Mucosa of descending colon (tissue), 3 donors: ENCODE measurements at regions of chr17 and their contacts with region 1.

Region 1: DNA sequence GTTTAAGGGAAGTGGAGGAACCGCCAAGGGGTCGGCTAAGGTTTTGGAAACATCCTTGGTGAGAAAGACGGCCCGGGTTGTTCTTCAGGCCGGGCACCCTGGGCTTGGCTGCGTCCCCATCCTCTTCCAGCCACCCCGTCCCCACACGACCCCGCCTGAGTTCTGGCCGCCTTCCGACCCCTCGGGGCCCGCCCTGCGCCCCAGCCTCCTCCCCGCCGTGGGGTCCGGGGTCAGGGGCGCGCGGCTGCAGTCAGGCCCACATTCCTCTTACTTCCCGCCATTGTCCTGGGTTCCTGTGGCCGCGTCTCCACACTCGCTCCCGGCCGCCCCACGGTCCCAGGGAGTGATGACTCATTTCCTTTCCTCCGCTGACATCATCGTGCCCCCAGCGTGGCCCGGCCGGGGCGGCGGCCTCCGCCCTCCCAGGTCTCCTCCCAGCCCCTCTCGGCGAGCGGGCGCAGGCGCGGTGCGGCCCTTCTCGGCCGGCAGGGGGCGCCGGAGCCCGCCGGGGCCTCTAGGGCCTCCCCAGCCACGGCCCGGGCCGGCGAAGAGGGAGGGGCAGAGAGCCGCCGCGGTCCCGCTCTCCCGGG is 59.6 kb downstream of the WSB1 start:
- DNase-seq: peak; percentile 86 to 94 (median 94)
- ATAC-seq: peak; percentile 96
- H3K4me3 ChIP-seq: peak overlapping the region; percentile 20
- H3K4me1 ChIP-seq: peaks cover 12% of the 10 kb centered on the region
- CTCF ChIP-seq: peak; percentile 95

Region 2: GRCh38 chr17:27430882-27431491 is 77.4 kb after region 1 on chr17:
- intact Hi-C with region 1: loop called in 1 of 2 experiments (anchors 10 kb)
- DNase-seq: peak in 2 of 3 donors; percentile 48 to 58
- ATAC-seq: peak; percentile 62
- H3K4me3 ChIP-seq: no peak overlapping the region
- H3K4me1 ChIP-seq: no peaks in the 10 kb centered on the region
- CTCF ChIP-seq: peak; percentile 25